PC-3 (cell line): ENCODE measurements at regions of chr17 and their contacts with region 1.

Region 1: DNA sequence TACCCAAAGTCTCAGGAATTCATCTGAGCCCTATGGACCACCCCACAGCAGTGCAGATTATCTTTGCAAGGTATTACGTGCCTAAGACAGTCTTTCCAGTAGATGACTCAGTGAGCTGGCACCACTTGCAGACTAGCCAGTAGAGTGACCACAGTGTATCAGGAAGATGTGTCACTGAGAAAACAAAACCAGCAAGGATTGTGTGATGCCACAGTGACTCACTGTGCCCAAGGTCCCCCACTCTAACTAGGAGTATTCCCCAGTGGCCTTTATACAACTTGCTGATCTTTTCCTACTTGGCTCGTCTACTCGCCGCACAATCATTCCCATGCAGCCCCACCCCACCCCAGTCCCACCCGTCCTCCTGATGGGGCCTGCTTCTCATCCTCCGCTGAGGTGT is 26.8 kb upstream of the PRKCA start:
- DNase-seq: peak; percentile 100
- ATAC-seq: peak; percentile 91
- H3K4me3 ChIP-seq: no peak overlapping the region; the same call in 1 of the 2 replicates
- H3K27ac ChIP-seq: peak overlapping the region; percentile 98
- H3K4me1 ChIP-seq: peaks cover 50% of the 10 kb centered on the region
- H3K27me3 ChIP-seq: no peaks in the 10 kb centered on the region
- CTCF ChIP-seq: no peak

Region 2: DNA sequence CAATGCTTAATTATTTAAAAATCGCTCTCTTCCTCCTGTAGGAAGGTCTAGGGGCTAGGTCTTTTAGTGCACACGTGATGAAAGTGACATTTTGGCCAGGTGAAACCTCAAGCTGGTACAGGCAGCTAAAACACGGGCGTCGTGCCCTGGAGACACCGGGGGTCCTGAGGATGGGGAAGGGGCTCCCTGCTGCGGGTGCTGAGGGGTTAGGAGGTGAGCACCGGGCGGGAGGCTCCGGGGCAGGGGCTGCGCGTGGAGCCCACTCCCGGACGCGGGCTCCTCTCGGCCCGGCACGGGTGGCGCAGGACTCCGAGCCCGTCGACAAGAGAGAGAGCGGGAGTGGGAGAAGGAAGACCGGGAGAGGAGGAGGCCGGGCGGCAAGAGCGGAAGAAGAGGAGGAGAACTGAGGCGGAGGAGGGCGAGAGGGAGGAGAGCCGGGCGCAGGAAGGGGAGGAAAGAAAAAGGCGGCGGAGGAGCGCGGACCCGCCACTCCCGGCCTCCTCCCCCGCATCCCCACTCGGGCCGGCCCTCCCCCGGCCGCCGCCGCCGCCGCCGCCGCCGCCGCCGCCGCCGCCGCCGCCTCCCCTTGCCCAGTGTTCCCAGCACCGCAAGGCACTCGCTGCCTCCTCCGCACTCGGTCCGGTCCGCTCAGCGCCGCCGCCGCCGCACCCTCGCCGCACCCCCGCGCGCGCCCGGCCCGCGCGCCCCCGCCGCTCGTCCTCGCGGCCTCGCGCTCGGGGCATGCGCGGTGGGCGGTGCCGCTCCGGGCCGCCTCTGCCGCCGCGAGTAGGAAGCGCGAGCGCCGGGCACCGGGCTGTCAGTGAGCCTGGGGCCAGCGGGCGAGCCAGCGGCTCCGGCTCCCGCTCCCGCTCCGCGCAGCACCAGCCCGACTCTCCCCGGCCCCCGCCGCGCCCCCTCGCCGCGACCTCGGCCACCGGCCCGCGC is 26.4 kb after region 1 on chr17 and contains the start of gene PRKCA:
- CTCF ChIA-PET with region 1: no interaction called
- POLR2A ChIA-PET with region 1: interaction called, 3 read pairs
- intact Hi-C with region 1: loop called (anchors 2 kb)
- DNase-seq: peak; percentile 87
- ATAC-seq: peak; percentile 78
- H3K4me3 ChIP-seq: peak within 1 kb of the TSS; percentile 94
- H3K27ac ChIP-seq: peak within 1 kb of the TSS; percentile 30
- H3K4me1 ChIP-seq: peaks cover 37% of the 10 kb centered on the region
- H3K27me3 ChIP-seq: no peaks in the 10 kb centered on the region
- CTCF ChIP-seq: no peak
- total RNA-seq, gene PRKCA: 22.6 and 28.2 TPM in 2 replicates

Region 3: DNA sequence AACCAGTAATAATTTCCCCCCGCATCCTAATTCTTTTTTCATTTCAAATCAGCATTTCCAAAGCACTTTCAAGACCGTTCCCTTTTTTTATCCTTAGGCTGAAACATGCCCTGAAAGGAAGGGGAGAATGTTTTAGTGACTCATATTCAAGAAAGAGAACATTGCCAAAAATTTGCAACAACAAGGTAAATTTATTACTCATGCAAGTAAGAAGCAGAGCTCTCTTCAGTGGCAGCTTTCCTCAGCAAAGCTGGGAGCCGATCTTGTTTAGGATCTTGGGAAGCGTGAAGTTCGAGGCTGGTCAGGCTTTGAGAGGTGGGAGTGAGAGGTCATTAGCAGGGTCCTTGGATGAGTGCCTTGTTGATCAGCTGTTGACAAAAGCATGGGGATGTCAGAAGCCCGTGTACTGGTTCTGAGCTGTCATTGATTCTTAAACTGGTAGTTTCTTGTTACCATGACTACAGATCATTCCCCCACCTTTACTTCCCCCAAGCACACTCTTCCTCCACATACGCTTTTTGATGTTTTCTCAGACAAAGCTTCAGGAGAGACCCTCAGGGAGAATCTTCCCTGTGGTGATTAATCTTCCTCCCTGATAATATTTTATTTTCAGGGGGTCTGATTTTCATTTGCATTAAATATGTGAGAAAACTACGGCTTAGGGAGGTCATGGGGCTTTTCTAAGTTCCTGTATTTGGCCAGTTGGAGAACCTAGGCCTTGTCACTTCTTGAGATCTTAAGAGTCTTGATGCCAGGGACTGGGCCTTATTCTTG is 156.4 kb after region 1 on chr17:
- CTCF ChIA-PET with region 1: no interaction called
- POLR2A ChIA-PET with region 1: interaction called, 10 read pairs
- intact Hi-C with region 1: no loop called
- DNase-seq: peak; percentile 93
- ATAC-seq: peak; percentile 94
- H3K4me3 ChIP-seq: peak overlapping the region; percentile 20; the same call in 1 of the 2 replicates
- H3K27ac ChIP-seq: peak overlapping the region; percentile 31
- H3K4me1 ChIP-seq: peaks cover 27% of the 10 kb centered on the region
- H3K27me3 ChIP-seq: no peaks in the 10 kb centered on the region
- CTCF ChIP-seq: no peak

Region 4: DNA sequence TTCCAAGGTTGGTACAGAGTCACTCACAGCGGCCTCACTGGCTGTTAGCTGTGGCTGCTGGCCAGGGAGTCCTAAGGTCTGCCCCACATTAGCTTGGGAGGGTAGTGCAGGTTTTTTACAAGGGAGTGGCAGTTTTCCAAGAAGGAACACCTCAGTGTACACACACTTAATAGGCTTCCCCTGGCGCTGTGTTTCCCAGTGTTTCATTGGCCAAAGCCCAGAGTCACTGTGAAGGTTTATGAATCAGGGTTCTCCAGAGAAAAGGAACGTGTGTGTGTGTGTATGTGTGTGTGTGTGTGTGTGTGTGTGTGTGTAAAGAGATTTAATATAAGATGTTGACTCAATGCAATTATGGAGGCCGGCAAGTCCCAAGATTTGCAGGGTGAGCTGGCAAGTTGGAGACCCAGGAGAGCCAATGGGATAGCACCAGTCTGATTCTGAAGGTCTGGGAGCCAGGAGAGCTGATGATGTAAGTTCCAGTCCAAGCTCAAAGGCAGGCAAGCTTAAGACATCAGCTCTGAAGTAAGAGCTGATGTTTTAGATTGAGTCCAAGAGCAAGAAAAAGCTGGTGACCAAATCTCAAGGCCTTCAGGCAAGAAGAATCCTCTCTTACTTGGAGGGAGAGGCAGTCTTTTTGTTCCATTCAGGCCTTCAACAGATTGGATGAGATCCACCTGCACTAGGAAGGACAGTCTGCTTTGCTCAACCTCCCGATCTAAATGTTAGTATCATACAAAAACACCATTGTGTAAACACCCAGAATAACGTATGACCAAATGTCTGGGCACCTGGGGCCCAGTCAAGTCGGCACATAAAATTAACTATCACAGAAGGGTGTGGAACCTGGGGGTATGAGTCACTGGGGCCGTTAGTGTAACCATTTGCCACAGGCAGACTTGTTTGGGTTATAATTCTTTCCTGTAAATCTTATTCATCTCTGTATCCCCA is 233.5 kb after region 1 on chr17:
- CTCF ChIA-PET with region 1: no interaction called
- POLR2A ChIA-PET with region 1: no interaction called
- intact Hi-C with region 1: loop called (anchors 5 kb)
- DNase-seq: peak; percentile 100
- ATAC-seq: peak; percentile 85
- H3K4me3 ChIP-seq: peak overlapping the region; percentile 21
- H3K27ac ChIP-seq: peak overlapping the region; percentile 96
- H3K4me1 ChIP-seq: peaks cover 53% of the 10 kb centered on the region
- H3K27me3 ChIP-seq: no peaks in the 10 kb centered on the region
- CTCF ChIP-seq: no peak

Region 5: DNA sequence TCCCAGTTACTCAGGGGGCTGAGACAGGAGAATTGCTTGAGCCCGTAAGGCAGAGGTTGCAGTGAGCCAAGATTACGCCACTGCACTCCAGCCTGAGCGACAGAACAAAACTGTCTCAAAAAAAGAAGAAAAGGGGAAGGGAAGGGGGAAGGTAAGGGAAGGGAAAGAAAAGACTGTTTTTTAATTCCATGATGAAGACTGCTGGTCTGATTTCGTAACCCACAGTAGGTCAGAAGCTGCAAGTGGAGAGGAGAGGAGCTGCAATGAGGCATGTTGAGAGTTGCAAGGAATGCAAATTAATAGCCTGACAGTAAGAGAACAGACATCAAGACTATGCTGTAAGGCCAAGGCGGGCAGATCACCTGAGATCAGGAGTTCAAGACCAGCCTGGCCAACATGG is 936.1 kb after region 1 on chr17:
- CTCF ChIA-PET with region 1: no interaction called
- POLR2A ChIA-PET with region 1: interaction called, 18 read pairs
- intact Hi-C with region 1: no loop called
- DNase-seq: no peak
- ATAC-seq: no peak
- H3K4me3 ChIP-seq: no peak overlapping the region
- H3K27ac ChIP-seq: no peak overlapping the region
- H3K4me1 ChIP-seq: peaks cover 12% of the 10 kb centered on the region
- H3K27me3 ChIP-seq: no peaks in the 10 kb centered on the region
- CTCF ChIP-seq: no peak